ENCODE measurements at regions of chr1 and their contacts with region 1.

Region 1: DNA sequence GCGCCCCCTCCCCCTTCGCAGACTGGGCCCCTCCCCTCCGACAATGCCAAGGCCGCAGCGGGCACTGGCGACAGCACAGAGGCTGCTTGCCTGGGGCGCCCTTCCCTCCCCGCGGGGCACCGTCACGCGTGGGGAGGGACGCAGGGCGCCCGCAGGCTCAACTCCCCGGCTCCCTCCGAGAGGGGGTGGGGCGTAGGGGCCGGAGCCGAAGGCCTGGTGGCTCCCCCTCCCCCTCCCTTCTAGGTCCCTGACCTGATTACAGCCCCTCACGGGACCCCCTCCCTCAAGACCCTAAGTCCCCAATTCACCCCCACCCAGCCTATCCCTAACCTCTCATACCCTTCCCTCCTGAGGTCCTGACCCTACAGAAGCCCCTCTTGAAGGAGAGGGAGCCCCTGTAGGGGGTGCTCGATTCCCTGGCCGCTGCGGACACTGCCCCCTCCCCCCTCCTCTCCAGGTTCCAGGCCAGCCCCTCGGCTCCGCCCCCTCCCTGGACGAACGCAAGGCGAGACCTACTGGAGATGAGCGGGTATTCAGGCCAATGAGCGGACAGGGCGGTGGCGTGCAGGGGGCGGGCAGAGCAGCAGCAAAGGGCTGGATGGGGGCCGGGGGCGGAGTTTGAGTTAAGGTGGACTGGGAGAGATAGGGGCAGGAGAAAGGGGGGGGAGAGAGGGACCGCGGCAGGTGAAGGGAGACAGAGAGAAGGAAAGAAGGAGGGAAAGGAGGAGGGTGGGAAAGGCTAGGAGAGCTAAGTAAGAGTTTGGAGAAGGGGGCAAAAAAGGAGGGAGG is 733 bp upstream of the ZBTB7B start:
- DNase-seq: peak; percentile 95 to 99 (median 97)
- ATAC-seq: peak; percentile 77
- H3K4me3 ChIP-seq: peak overlapping the region; percentile 75 to 99
- H3K4me3 Mint-ChIP-seq: peak overlapping the region; percentile 88
- H3K27ac ChIP-seq: peak overlapping the region; percentile 64 to 90
- H3K27ac Mint-ChIP-seq: peak overlapping the region; percentile 82
- H3K4me1 ChIP-seq: peaks cover 57% of the 10 kb centered on the region
- H3K4me1 Mint-ChIP-seq: peaks cover 59% of the 10 kb centered on the region
- H3K27me3 ChIP-seq: no peaks in the 10 kb centered on the region
- H3K27me3 Mint-ChIP-seq: no peaks in the 10 kb centered on the region
- CTCF ChIP-seq: no peak

Region 2: DNA sequence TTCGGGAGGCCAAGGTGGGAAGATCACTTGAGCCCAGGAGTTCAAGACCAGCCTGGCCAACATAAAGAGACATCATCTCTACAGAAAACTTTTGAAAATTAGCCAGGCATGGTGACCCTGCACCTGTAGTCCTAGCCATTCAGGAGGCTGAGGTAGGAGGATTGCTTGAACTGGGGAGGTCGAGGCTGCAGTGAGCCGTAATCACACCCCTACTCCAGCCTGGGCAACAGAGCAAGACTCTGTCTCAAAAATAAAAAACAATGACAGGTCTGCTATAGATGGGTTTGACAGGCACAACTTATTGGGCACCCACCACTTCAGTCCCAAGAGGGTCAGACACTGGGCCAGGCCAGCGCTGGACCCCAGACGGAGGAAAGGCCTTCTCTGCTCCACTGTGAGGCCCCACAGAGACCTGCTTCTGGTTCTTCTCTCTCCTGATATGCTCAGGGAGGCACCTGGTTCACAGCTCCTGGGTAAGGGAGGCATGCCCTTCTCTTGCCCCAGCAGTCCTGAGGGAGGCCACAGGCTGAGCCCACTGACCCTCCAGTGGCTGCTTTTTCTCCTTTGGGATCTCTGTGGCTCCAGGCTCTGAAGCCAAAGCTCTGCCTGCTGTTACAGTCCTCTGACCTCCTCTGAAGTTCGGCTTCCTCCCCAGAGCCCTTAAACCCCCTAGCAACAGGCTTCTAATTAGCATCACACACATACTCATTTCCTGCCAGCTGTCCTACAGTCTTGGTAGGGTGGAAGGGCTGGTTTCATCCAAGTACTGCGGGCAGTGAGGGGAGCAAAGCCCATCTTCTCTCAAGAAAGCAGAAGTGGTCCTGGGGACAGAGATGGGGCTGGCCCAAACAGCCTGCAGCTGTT is 1403.3 kb before region 1 on chr1:
- CTCF ChIA-PET with region 1: no interaction called
- POLR2A ChIA-PET with region 1: no interaction called
- intact Hi-C with region 1: no loop called
- DNase-seq: peak in 2 of 9 experiments; percentile 8 to 46
- ATAC-seq: peak; percentile 62
- H3K4me3 ChIP-seq: no peak overlapping the region
- H3K4me3 Mint-ChIP-seq: no peak overlapping the region
- H3K27ac ChIP-seq: no peak overlapping the region
- H3K27ac Mint-ChIP-seq: peak overlapping the region; percentile 29
- H3K4me1 ChIP-seq: peaks cover 7% of the 10 kb centered on the region
- H3K4me1 Mint-ChIP-seq: peaks cover 8% of the 10 kb centered on the region
- H3K27me3 ChIP-seq: no peaks in the 10 kb centered on the region
- H3K27me3 Mint-ChIP-seq: no peaks in the 10 kb centered on the region
- CTCF ChIP-seq: no peak

Region 3: GRCh38 chr1:154847891-154848290 is 154.0 kb before region 1 on chr1:
- CTCF ChIA-PET with region 1: no interaction called
- POLR2A ChIA-PET with region 1: no interaction called
- intact Hi-C with region 1: no loop called
- DNase-seq: no peak
- ATAC-seq: no peak
- H3K4me3 ChIP-seq: no peak overlapping the region
- H3K4me3 Mint-ChIP-seq: no peak overlapping the region
- H3K27ac ChIP-seq: no peak overlapping the region
- H3K27ac Mint-ChIP-seq: no peak overlapping the region
- H3K4me1 ChIP-seq: no peaks in the 10 kb centered on the region
- H3K4me1 Mint-ChIP-seq: no peaks in the 10 kb centered on the region
- H3K27me3 ChIP-seq: no peaks in the 10 kb centered on the region
- H3K27me3 Mint-ChIP-seq: no peaks in the 10 kb centered on the region
- CTCF ChIP-seq: no peak

Region 4: DNA sequence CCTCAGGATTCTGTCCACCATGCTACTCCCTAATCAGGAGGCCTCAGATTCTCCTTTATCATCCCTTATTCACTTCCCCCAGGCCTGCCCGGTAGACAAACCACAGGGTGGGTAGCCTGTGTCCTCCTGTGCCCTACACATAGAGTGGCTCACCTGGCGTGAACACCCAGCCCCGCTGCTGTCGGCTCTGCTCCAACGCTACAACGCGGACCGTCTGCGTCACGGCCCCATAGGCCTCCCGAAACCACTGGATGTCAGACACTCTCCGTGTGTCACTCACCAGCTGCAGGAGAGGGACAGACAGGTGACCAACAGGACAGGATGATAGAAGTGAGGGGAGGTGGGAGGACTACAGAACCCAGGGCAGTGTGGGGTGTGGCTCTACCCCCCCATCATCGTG is 75.7 kb before region 1 on chr1:
- CTCF ChIA-PET with region 1: no interaction called
- POLR2A ChIA-PET with region 1: no interaction called
- intact Hi-C with region 1: no loop called
- DNase-seq: no peak
- ATAC-seq: no peak
- H3K4me3 ChIP-seq: no peak overlapping the region
- H3K4me3 Mint-ChIP-seq: no peak overlapping the region
- H3K27ac ChIP-seq: no peak overlapping the region
- H3K27ac Mint-ChIP-seq: no peak overlapping the region
- H3K4me1 ChIP-seq: no peaks in the 10 kb centered on the region
- H3K4me1 Mint-ChIP-seq: peaks cover 10% of the 10 kb centered on the region
- H3K27me3 ChIP-seq: no peaks in the 10 kb centered on the region
- H3K27me3 Mint-ChIP-seq: no peaks in the 10 kb centered on the region
- CTCF ChIP-seq: no peak

Region 5: GRCh38 chr1:154936555-154937084 is 65.2 kb before region 1 on chr1 and contains the start of gene PMVK:
- CTCF ChIA-PET with region 1: interaction called, 8 read pairs
- POLR2A ChIA-PET with region 1: no interaction called
- intact Hi-C with region 1: loop called (anchors 1 kb)
- DNase-seq: peak; percentile 89 to 98 (median 96)
- ATAC-seq: peak; percentile 85
- H3K4me3 ChIP-seq: peak within 1 kb of the TSS; percentile 87 to 90
- H3K4me3 Mint-ChIP-seq: peak within 1 kb of the TSS; percentile 97
- H3K27ac ChIP-seq: peak within 1 kb of the TSS; percentile 94 to 97
- H3K27ac Mint-ChIP-seq: peak within 1 kb of the TSS; percentile 99
- H3K4me1 ChIP-seq: peaks cover 32% of the 10 kb centered on the region
- H3K4me1 Mint-ChIP-seq: peaks cover 49% of the 10 kb centered on the region
- H3K27me3 ChIP-seq: no peaks in the 10 kb centered on the region
- H3K27me3 Mint-ChIP-seq: no peaks in the 10 kb centered on the region
- CTCF ChIP-seq: no peak
- total RNA-seq, gene PMVK: 6.7 to 7.3 TPM

Region 6: GRCh38 chr1:154974063-154974807 is 27.6 kb before region 1 on chr1 and contains the start of gene CKS1B:
- CTCF ChIA-PET with region 1: interaction called, 27 read pairs
- POLR2A ChIA-PET with region 1: interaction called, 8 read pairs
- intact Hi-C with region 1: loop called (anchors 1 kb)
- DNase-seq: peak; percentile 92 to 99 (median 97)
- ATAC-seq: peak; percentile 86
- H3K4me3 ChIP-seq: peak within 1 kb of the TSS; percentile 67
- H3K4me3 Mint-ChIP-seq: no peak within 1 kb of the TSS
- H3K27ac ChIP-seq: peak within 1 kb of the TSS; percentile 90 to 95
- H3K27ac Mint-ChIP-seq: no peak within 1 kb of the TSS
- H3K4me1 ChIP-seq: peaks cover 23% of the 10 kb centered on the region
- H3K4me1 Mint-ChIP-seq: peaks cover 26% of the 10 kb centered on the region
- H3K27me3 ChIP-seq: no peaks in the 10 kb centered on the region
- H3K27me3 Mint-ChIP-seq: no peaks in the 10 kb centered on the region
- CTCF ChIP-seq: no peak
- total RNA-seq, gene CKS1B: 2.3 to 2.9 TPM

Region 7: GRCh38 chr1:155017041-155017945 is 15.4 kb after region 1 on chr1:
- CTCF ChIA-PET with region 1: interaction called, 178 read pairs
- POLR2A ChIA-PET with region 1: interaction called, 10 read pairs
- intact Hi-C with region 1: loop called (anchors 1 kb)
- DNase-seq: peak; percentile 71 to 92 (median 88)
- ATAC-seq: peak; percentile 98
- H3K4me3 ChIP-seq: peak overlapping the region; percentile 31 to 46
- H3K4me3 Mint-ChIP-seq: peak overlapping the region; percentile 59
- H3K27ac ChIP-seq: no peak overlapping the region
- H3K27ac Mint-ChIP-seq: no peak overlapping the region
- H3K4me1 ChIP-seq: peaks cover 55% of the 10 kb centered on the region
- H3K4me1 Mint-ChIP-seq: peaks cover 44% of the 10 kb centered on the region
- H3K27me3 ChIP-seq: no peaks in the 10 kb centered on the region
- H3K27me3 Mint-ChIP-seq: no peaks in the 10 kb centered on the region
- CTCF ChIP-seq: peak; percentile 99

Region 8: DNA sequence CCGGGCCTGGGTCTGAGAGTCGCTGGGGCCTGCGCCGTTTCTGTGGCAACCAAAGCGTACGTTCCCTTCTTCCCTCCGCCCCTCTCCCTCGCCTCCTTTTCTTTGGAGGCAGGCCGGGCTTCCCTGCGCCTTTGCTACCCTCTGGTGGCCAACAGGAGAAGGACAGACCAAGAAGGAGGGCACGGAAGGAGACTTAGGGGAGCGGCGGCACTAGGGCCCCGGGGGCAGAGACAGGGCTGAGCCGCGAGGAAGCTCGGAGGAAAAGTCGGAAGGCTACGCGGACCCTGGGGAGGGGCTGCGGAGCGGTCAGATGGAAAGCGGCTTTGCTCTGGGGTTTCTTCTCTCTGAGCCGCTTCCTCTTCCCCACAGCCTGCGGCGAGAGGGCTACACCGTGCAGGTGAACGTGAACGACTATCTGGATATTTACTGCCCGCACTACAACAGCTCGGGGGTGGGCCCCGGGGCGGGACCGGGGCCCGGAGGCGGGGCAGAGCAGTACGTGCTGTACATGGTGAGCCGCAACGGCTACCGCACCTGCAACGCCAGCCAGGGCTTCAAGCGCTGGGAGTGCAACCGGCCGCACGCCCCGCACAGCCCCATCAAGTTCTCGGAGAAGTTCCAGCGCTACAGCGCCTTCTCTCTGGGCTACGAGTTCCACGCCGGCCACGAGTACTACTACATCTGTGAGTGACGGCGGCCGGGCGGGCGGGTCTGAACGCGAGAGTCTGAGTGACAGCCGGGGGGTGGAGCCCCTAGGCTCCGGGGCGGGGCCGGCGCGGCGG is 83.0 kb after region 1 on chr1:
- CTCF ChIA-PET with region 1: interaction called, 3 read pairs
- POLR2A ChIA-PET with region 1: no interaction called
- intact Hi-C with region 1: loop called (anchors 1 to 2 kb)
- DNase-seq: peak; percentile 80 to 94 (median 92)
- ATAC-seq: peak; percentile 73
- H3K4me3 ChIP-seq: peak overlapping the region; percentile 82 to 92
- H3K4me3 Mint-ChIP-seq: peak overlapping the region; percentile 95
- H3K27ac ChIP-seq: peak overlapping the region; percentile 57 to 85
- H3K27ac Mint-ChIP-seq: peak overlapping the region; percentile 90
- H3K4me1 ChIP-seq: peaks cover 54% of the 10 kb centered on the region
- H3K4me1 Mint-ChIP-seq: peaks cover 39% of the 10 kb centered on the region
- H3K27me3 ChIP-seq: peaks cover 39 to 44% of the 10 kb centered on the region in 2 experiments
- H3K27me3 Mint-ChIP-seq: peaks cover 30% of the 10 kb centered on the region
- CTCF ChIP-seq: peak; percentile 84

Measured in CD8-positive, alpha-beta T cell (primary cell).